CD8-positive, alpha-beta memory T cell (primary cell): ENCODE measurements at regions of chr14 and their contacts with region 1.

Region 1: GRCh38 chr14:92651106-92651757 is 97.2 kb downstream of the LGMN start:
- DNase-seq: peak; percentile 61 to 91 (median 85)
- H3K4me3 ChIP-seq: peak overlapping the region; percentile 63
- H3K4me3 Mint-ChIP-seq: peak overlapping the region; percentile 72 to 95 (median 89)
- H3K27ac ChIP-seq: peak overlapping the region; percentile 66
- H3K27ac Mint-ChIP-seq: peak overlapping the region; percentile 92 to 100 (median 98)
- H3K4me1 ChIP-seq: peaks cover 64% of the 10 kb centered on the region
- H3K4me1 Mint-ChIP-seq: peaks cover 82 to 98% (median 83%) of the 10 kb centered on the region in 3 donors
- H3K27me3 ChIP-seq: no peaks in the 10 kb centered on the region
- H3K27me3 Mint-ChIP-seq: peaks cover 0 to 3% of the 10 kb centered on the region in 2 donors

Region 2: DNA sequence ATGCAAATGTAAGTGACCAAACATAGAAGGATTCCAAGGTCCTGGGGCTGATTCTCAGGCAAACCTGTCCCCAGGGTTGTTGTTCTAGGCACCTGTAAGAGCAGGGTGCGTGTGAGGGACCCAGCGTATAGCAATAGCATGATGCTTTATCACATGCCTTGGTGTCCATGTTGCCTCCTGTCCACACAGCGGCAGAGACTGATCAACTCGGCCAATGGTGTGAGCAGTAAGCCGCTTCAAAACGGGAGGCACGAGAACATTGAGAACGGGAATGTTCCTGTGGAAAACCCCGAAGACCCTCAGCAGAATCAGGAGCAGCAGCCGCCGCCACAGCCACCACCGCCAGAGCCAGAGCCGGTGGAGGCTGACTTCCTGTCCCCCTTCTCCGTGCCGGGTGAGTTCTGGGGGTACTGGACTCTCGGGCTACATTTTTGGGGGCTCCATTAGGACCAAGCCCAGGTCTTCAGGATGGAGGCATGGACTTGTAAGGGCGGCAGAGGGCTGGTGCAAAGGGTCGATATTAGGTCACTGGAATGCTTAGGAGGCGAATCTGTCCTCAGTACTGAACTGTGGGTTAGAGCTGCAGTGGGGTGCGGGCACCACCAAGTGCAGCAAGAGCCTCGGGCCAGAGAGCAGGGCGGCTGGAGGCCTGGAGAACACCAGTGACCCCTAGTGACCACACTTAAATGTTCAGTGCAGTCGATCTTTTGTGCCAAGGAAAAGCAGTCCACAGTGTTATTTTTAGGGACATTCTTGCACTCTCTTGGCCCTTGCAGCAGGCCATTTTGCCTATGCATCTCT is 194.8 kb before region 1 on chr14:
- CTCF ChIA-PET with region 1: no interaction called
- POLR2A ChIA-PET with region 1: no interaction called
- DNase-seq: no peak
- H3K4me3 ChIP-seq: no peak overlapping the region
- H3K4me3 Mint-ChIP-seq: no peak overlapping the region
- H3K27ac ChIP-seq: no peak overlapping the region
- H3K27ac Mint-ChIP-seq: no peak overlapping the region
- H3K4me1 ChIP-seq: peaks cover 10% of the 10 kb centered on the region
- H3K4me1 Mint-ChIP-seq: peaks cover 7 to 20% (median 13%) of the 10 kb centered on the region in 3 donors
- H3K27me3 ChIP-seq: no peaks in the 10 kb centered on the region
- H3K27me3 Mint-ChIP-seq: no peaks in the 10 kb centered on the region

Region 3: GRCh38 chr14:92585981-92586937 is 65.0 kb before region 1 on chr14:
- CTCF ChIA-PET with region 1: interaction called, 4 read pairs
- POLR2A ChIA-PET with region 1: interaction called, 16 read pairs
- DNase-seq: peak in 3 of 5 donors; percentile 68 to 78 (median 72)
- H3K4me3 ChIP-seq: peak overlapping the region; percentile 55
- H3K4me3 Mint-ChIP-seq: peak overlapping the region; percentile 48 to 86 (median 73)
- H3K27ac ChIP-seq: peak overlapping the region; percentile 60
- H3K27ac Mint-ChIP-seq: peak overlapping the region; percentile 77 to 99 (median 90)
- H3K4me1 ChIP-seq: peaks cover 99% of the 10 kb centered on the region
- H3K4me1 Mint-ChIP-seq: peaks cover 96 to 100% (median 100%) of the 10 kb centered on the region in 3 donors
- H3K27me3 ChIP-seq: no peaks in the 10 kb centered on the region
- H3K27me3 Mint-ChIP-seq: no peaks in the 10 kb centered on the region